Transverse colon (tissue), 4 donors: ENCODE measurements at regions of chr15 and their contacts with region 1.

Region 1: GRCh38 chr15:62896978-62897647 is 145.4 kb upstream of the TPM1 start:
- DNase-seq: peak; percentile 83
- H3K4me3 ChIP-seq: no peak overlapping the region
- H3K27ac ChIP-seq: peak overlapping the region; percentile 75 to 87 (median 84)
- H3K4me1 ChIP-seq: peaks cover 27 to 40% (median 34%) of the 10 kb centered on the region in 4 donors
- H3K27me3 ChIP-seq: no peaks in the 10 kb centered on the region
- CTCF ChIP-seq: no peak
- EP300 ChIP-seq: peak; percentile 89
- POLR2A ChIP-seq: no peak

Region 2: DNA sequence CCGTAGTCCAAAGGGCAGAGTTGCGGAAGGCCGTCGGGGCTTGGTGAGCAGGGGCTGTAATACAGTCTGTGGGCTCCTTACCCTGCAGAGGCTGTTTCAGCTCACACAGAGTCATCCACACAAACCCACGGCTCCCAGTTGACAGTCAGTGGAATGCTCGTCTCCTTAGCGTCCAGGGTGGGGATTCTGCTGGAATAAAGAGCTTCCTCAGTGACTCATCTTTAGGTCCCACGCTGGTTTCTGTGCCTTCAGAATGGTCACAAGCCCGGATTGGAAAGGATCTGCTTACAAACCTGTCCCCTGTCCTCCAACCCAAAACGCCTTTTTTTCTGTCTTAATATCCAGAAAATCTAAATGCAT is 55.9 kb before region 1 on chr15:
- in situ Hi-C with region 1: no loop called
- intact Hi-C with region 1: no loop called
- DNase-seq: no peak
- H3K4me3 ChIP-seq: no peak overlapping the region
- H3K27ac ChIP-seq: no peak overlapping the region
- H3K4me1 ChIP-seq: peaks cover 0 to 10% (median 0%) of the 10 kb centered on the region in 4 donors
- H3K27me3 ChIP-seq: no peaks in the 10 kb centered on the region
- CTCF ChIP-seq: no peak
- EP300 ChIP-seq: no peak
- POLR2A ChIP-seq: no peak

Region 3: DNA sequence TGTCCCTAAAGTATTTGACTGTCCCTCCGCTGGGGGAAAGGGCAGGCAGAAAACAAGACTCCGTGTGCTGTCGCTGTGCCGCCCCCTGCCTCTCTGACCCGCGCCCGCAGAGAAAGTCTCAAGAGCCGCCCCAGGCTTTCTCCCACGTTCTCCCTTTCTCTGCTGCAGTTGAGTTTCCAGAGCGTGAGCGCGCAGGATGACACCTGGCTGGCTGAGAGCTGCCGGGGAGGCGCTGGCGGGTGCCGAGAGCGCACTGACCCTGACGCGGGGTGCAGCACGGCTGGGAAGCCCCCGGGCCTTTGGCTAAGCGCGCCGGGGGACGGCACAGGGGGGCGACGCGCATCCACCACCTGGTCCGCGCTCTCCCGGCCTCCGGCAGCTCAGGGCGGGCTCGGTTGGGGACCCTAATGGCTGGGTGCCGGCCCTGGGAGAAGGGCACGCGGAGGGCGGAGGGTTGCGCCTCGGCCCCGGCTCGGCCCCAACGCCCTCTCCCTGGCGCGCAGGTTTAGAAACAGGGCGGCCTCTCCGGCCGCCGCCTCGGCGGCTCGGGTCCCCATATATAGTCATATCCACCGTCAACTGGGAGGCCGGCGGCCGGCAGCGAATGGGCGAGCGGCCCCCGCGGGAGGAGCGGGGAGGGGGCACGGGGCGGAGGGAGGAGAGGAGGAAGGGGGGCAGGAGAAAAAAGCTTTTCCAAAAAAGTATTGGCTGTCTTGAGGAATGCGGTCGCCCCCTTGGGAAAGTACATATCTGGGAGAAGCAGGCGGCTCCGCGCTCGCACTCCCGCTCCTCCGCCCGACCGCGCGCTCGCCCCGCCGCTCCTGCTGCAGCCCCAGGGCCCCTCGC is 145.1 kb after region 1 on chr15 and contains the start of gene TPM1:
- in situ Hi-C with region 1: loop called in 1 of 4 experiments (anchors 25 kb)
- intact Hi-C with region 1: loop called (anchors 5 kb)
- DNase-seq: peak; percentile 82
- H3K4me3 ChIP-seq: peak within 1 kb of the TSS; percentile 80 to 88 (median 84)
- H3K27ac ChIP-seq: peak within 1 kb of the TSS; percentile 96 to 98 (median 96)
- H3K4me1 ChIP-seq: peaks cover 0 to 45% (median 24%) of the 10 kb centered on the region in 4 donors
- H3K27me3 ChIP-seq: peaks cover 26% of the 10 kb centered on the region
- CTCF ChIP-seq: no peak
- EP300 ChIP-seq: no peak
- POLR2A ChIP-seq: peak; percentile 90
- total RNA-seq, gene TPM1: 775 to 2,480 (median 1,140) TPM

Region 4: DNA sequence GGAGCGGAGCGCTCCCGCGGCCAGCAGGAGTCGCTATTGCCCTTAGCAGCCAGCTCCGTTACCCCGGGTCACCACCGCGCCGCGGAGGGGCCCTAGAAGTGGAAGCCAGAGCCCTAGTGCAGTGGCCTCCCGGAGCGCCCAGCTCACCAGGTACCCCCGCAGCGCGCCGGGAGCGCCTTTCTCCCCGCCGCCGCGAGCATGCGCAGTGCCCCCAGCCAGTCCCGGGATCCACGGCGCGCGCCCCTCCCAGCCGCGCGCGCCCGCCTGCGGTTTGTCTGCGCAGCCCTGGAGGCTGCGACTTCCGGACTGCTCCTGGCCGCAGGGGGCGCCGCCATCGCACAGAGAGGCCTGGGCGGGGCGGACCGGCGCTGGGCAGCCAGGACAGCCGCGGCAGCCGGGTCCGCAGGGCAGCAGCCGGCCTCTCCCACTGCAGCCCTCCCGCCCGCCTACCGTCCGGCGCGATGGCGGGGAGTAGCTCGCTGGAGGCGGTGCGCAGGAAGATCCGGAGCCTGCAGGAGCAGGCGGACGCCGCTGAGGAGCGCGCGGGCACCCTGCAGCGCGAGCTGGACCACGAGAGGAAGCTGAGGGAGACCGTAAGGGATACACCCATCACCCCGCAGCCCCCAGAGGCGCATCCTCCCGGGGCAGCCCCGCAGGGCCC is 151.1 kb after region 1 on chr15:
- in situ Hi-C with region 1: loop called in 1 of 4 experiments (anchors 25 kb)
- intact Hi-C with region 1: loop called (anchors 5 kb)
- DNase-seq: peak; percentile 93
- H3K4me3 ChIP-seq: peak overlapping the region; percentile 60 to 88 (median 86)
- H3K27ac ChIP-seq: peak overlapping the region; percentile 96 to 98 (median 96)
- H3K4me1 ChIP-seq: peaks cover 16 to 81% (median 54%) of the 10 kb centered on the region in 4 donors
- H3K27me3 ChIP-seq: peaks cover 14% of the 10 kb centered on the region
- CTCF ChIP-seq: peak; percentile 91 to 99 (median 96)
- EP300 ChIP-seq: no peak
- POLR2A ChIP-seq: peak; percentile 80

Region 5: GRCh38 chr15:64153480-64154367 is 1256.6 kb after region 1 on chr15:
- in situ Hi-C with region 1: no loop called
- intact Hi-C with region 1: no loop called
- DNase-seq: peak; percentile 92
- H3K4me3 ChIP-seq: peak overlapping the region in 1 of 4 donors; percentile 8
- H3K27ac ChIP-seq: peak overlapping the region in 3 of 4 donors; percentile 6 to 27 (median 7)
- H3K4me1 ChIP-seq: peaks cover 13 to 28% (median 24%) of the 10 kb centered on the region in 4 donors
- H3K27me3 ChIP-seq: peaks cover 26% of the 10 kb centered on the region
- CTCF ChIP-seq: peak; percentile 92 to 99 (median 98)
- EP300 ChIP-seq: no peak
- POLR2A ChIP-seq: peak; percentile 18